CD8-positive, alpha-beta T cell (primary cell): ENCODE measurements at regions of chr7 and their contacts with region 1.

Region 1: GRCh38 chr7:152675759-152676636 is at the start of gene XRCC2:
- DNase-seq: peak; percentile 88 to 99 (median 96)
- ATAC-seq: peak; percentile 94
- H3K4me3 ChIP-seq: peak within 1 kb of the TSS; percentile 65 to 89
- H3K4me3 Mint-ChIP-seq: peak within 1 kb of the TSS; percentile 96
- H3K27ac ChIP-seq: peak within 1 kb of the TSS; percentile 79 to 87
- H3K27ac Mint-ChIP-seq: peak within 1 kb of the TSS; percentile 83
- H3K4me1 ChIP-seq: peaks cover 8% of the 10 kb centered on the region
- H3K4me1 Mint-ChIP-seq: peaks cover 11% of the 10 kb centered on the region
- H3K27me3 ChIP-seq: no peaks in the 10 kb centered on the region
- H3K27me3 Mint-ChIP-seq: no peaks in the 10 kb centered on the region
- CTCF ChIP-seq: no peak
- total RNA-seq, gene XRCC2: 0.17 to 0.30 TPM

Region 2: GRCh38 chr7:152436111-152436930 is 239.7 kb before region 1 on chr7:
- CTCF ChIA-PET with region 1: no interaction called
- POLR2A ChIA-PET with region 1: no interaction called
- intact Hi-C with region 1: loop called (anchors 1 to 5 kb)
- DNase-seq: peak; percentile 84 to 95 (median 90)
- ATAC-seq: peak; percentile 73
- H3K4me3 ChIP-seq: peak overlapping the region; percentile 59 to 79
- H3K4me3 Mint-ChIP-seq: peak overlapping the region; percentile 88
- H3K27ac ChIP-seq: peak overlapping the region; percentile 86 to 93
- H3K27ac Mint-ChIP-seq: peak overlapping the region; percentile 96
- H3K4me1 ChIP-seq: peaks cover 16% of the 10 kb centered on the region
- H3K4me1 Mint-ChIP-seq: peaks cover 31% of the 10 kb centered on the region
- H3K27me3 ChIP-seq: no peaks in the 10 kb centered on the region
- H3K27me3 Mint-ChIP-seq: no peaks in the 10 kb centered on the region
- CTCF ChIP-seq: no peak

Region 3: DNA sequence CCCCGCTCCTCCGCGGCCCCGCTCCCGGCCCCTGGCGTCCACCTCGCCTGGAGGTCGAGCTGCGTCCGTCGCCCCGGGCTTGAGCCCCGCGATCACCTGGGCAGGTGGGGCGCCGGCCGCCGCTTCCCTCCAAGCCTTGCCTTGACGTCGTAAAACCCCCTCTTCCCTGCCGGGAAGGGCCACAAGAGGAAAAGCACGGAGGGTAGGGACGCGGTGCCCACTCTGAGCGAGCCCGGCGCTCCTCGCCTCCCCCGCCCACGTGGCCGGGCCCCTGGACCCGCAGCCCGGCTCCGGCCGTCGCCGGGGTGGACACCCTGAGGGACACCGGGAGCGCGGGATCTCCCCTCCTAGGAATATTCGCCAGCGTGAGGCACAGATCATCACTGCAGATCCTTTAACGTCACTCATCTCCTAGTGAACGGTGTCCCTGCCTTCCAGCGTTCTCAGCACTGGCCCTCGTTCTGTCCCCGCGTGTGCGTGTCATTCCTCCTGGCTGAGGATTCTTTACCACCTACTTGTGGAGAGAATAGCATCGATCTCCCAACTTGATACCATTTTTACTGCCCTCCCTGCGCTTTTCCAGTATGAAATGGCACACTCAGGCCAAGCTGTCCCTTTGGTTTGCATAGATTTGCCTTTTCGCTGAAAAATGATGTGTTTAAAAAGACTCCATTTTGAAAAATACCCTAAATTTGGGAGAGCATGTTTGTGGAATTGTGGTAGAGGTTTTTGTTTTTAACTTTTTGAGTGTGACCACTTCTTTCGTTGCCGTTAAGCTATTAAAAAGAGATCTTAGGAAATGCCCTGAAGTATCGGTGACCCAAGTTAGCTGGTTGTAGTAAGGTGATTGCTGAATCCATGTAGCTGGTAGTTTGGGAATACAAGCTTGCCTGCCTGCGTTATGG is 84.2 kb after region 1 on chr7:
- CTCF ChIA-PET with region 1: no interaction called
- POLR2A ChIA-PET with region 1: no interaction called
- intact Hi-C with region 1: loop called (anchors 1 kb)
- DNase-seq: peak in 7 of 9 experiments; percentile 4 to 52 (median 22)
- ATAC-seq: peak; percentile 26
- H3K4me3 ChIP-seq: peak overlapping the region; percentile 58 to 79
- H3K4me3 Mint-ChIP-seq: peak overlapping the region; percentile 94
- H3K27ac ChIP-seq: peak overlapping the region; percentile 58 to 88
- H3K27ac Mint-ChIP-seq: peak overlapping the region; percentile 92
- H3K4me1 ChIP-seq: peaks cover 20% of the 10 kb centered on the region
- H3K4me1 Mint-ChIP-seq: peaks cover 28% of the 10 kb centered on the region
- H3K27me3 ChIP-seq: no peaks in the 10 kb centered on the region
- H3K27me3 Mint-ChIP-seq: no peaks in the 10 kb centered on the region
- CTCF ChIP-seq: no peak

Region 4: GRCh38 chr7:152967958-152968357 is 292.0 kb after region 1 on chr7:
- CTCF ChIA-PET with region 1: no interaction called
- POLR2A ChIA-PET with region 1: no interaction called
- intact Hi-C with region 1: no loop called
- DNase-seq: no peak
- ATAC-seq: no peak
- H3K4me3 ChIP-seq: no peak overlapping the region
- H3K4me3 Mint-ChIP-seq: no peak overlapping the region
- H3K27ac ChIP-seq: no peak overlapping the region
- H3K27ac Mint-ChIP-seq: no peak overlapping the region
- H3K4me1 ChIP-seq: no peaks in the 10 kb centered on the region
- H3K4me1 Mint-ChIP-seq: no peaks in the 10 kb centered on the region
- H3K27me3 ChIP-seq: no peaks in the 10 kb centered on the region
- H3K27me3 Mint-ChIP-seq: peaks cover 3% of the 10 kb centered on the region
- CTCF ChIP-seq: no peak

Region 5: GRCh38 chr7:153657182-153657800 is 981.3 kb after region 1 on chr7:
- CTCF ChIA-PET with region 1: no interaction called
- POLR2A ChIA-PET with region 1: no interaction called
- intact Hi-C with region 1: no loop called
- DNase-seq: no peak
- ATAC-seq: no peak
- H3K4me3 ChIP-seq: no peak overlapping the region
- H3K4me3 Mint-ChIP-seq: no peak overlapping the region
- H3K27ac ChIP-seq: no peak overlapping the region
- H3K27ac Mint-ChIP-seq: no peak overlapping the region
- H3K4me1 ChIP-seq: no peaks in the 10 kb centered on the region
- H3K4me1 Mint-ChIP-seq: no peaks in the 10 kb centered on the region
- H3K27me3 ChIP-seq: no peaks in the 10 kb centered on the region
- H3K27me3 Mint-ChIP-seq: no peaks in the 10 kb centered on the region
- CTCF ChIP-seq: no peak